Breast epithelium (tissue), 4 donors: ENCODE measurements at regions of chr6 and their contacts with region 1.

Region 1: DNA sequence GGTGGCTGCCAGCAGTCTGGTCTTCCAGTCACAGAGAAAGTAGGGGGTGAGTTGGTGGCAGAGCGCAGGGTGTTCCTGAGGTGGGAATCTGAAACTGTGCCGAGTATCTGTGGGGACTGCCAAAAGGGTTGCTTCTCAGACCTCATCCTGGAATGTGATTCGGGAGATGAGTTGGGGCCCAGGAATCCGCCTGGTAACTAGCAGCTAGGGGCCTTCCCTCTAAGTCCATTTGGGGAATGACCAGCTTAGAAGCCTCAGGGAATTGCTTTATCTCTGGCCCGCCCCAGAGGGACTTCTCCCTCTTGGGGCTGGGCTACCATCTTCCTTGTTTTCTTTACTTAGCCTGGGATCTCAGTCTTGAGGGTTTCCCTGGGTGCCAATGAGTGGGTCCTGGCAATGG is 49.6 kb downstream of the MOCS1 start:
- DNase-seq: no peak
- H3K4me3 ChIP-seq: no peak overlapping the region
- H3K27ac ChIP-seq: peak overlapping the region in 1 of 2 donors; percentile 7
- H3K4me1 ChIP-seq: no peaks in the 10 kb centered on the region
- H3K27me3 ChIP-seq: no peaks in the 10 kb centered on the region
- CTCF ChIP-seq: no peak
- POLR2A ChIP-seq: no peak

Region 2: GRCh38 chr6:39929738-39930461 is 45.2 kb after region 1 on chr6:
- intact Hi-C with region 1: loop called (anchors 2 kb)
- DNase-seq: no peak
- H3K4me3 ChIP-seq: peak overlapping the region in 1 of 3 donors; percentile 13
- H3K27ac ChIP-seq: peak overlapping the region in 1 of 2 donors; percentile 75
- H3K4me1 ChIP-seq: peaks cover 3 to 4% of the 10 kb centered on the region in 2 donors
- H3K27me3 ChIP-seq: no peaks in the 10 kb centered on the region
- CTCF ChIP-seq: no peak
- POLR2A ChIP-seq: no peak